Caco-2 (cell line): ENCODE measurements at regions of chr20 and their contacts with region 1.

Region 1: GRCh38 chr20:47453142-47453782 is 48.4 kb upstream of the NCOA3 start:
- DNase-seq: peak; percentile 67 to 82
- H3K4me3 ChIP-seq: no peak overlapping the region
- H3K4me3 Mint-ChIP-seq: peak overlapping the region; percentile 64
- H3K27ac Mint-ChIP-seq: peak overlapping the region; percentile 94
- H3K4me1 ChIP-seq: peaks cover 49% of the 10 kb centered on the region
- H3K4me1 Mint-ChIP-seq: peaks cover 45% of the 10 kb centered on the region
- H3K27me3 ChIP-seq: no peaks in the 10 kb centered on the region
- H3K27me3 Mint-ChIP-seq: no peaks in the 10 kb centered on the region
- CTCF ChIP-seq: no peak

Region 2: GRCh38 chr20:47392015-47392720 is 61.1 kb before region 1 on chr20:
- CTCF ChIA-PET with region 1: no interaction called
- POLR2A ChIA-PET with region 1: interaction called, 3 read pairs
- intact Hi-C with region 1: loop called (anchors 1 kb)
- DNase-seq: peak; percentile 68 to 82
- H3K4me3 ChIP-seq: no peak overlapping the region
- H3K4me3 Mint-ChIP-seq: no peak overlapping the region
- H3K27ac Mint-ChIP-seq: peak overlapping the region; percentile 64
- H3K4me1 ChIP-seq: peaks cover 12% of the 10 kb centered on the region
- H3K4me1 Mint-ChIP-seq: peaks cover 21% of the 10 kb centered on the region
- H3K27me3 ChIP-seq: no peaks in the 10 kb centered on the region
- H3K27me3 Mint-ChIP-seq: no peaks in the 10 kb centered on the region
- CTCF ChIP-seq: no peak

Region 3: DNA sequence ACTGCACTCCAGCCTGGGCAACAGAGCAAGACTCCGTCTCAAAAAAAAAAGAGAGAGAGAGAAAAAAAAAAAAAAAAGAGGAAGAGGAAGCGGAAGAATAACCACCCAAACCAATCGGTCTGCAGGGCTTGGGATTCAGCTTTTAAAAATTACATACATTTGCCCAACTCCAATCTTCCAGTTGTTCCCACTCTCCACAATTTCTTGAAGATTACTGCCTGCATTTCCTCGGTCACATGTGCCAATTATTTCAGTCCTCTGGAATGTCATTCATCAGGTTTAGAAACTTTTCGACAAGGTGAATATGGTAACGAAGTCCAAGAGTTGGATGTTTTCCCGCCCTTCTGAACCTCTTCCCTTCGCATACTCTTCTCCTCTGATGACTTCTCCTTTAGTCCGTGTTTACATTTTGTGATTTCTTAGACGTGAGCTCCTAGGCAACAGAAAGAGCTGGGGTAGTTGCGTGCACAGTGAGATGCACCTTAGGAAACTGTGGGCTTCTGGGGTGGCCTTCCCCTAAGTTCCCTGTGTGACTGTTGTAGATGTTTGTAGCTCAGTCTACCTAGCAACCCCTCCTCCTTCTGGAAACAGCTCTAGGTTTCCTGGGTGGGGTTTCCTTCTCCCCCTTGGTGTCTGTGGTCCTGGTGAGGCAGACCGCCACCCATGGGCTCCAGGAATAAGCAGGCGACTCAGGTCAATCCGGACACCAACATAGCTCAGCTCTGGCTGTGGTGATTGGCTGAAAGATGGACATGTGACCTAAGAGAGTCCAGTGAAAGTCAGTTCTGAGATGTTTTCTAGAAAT is 14.5 kb before region 1 on chr20:
- CTCF ChIA-PET with region 1: interaction called, 7 read pairs
- POLR2A ChIA-PET with region 1: interaction called, 60 read pairs
- intact Hi-C with region 1: loop called (anchors 1 kb)
- DNase-seq: peak; percentile 92 to 96
- H3K4me3 ChIP-seq: peak overlapping the region; percentile 2; the same call in 1 of the 2 replicates
- H3K4me3 Mint-ChIP-seq: peak overlapping the region; percentile 64
- H3K27ac Mint-ChIP-seq: peak overlapping the region; percentile 91
- H3K4me1 ChIP-seq: peaks cover 53% of the 10 kb centered on the region
- H3K4me1 Mint-ChIP-seq: peaks cover 28% of the 10 kb centered on the region
- H3K27me3 ChIP-seq: no peaks in the 10 kb centered on the region
- H3K27me3 Mint-ChIP-seq: no peaks in the 10 kb centered on the region
- CTCF ChIP-seq: no peak

Region 4: GRCh38 chr20:47464380-47465101 is 11.3 kb after region 1 on chr20:
- CTCF ChIA-PET with region 1: interaction called, 15 read pairs
- POLR2A ChIA-PET with region 1: interaction called, 4 read pairs
- intact Hi-C with region 1: loop called (anchors 1 kb)
- DNase-seq: peak; percentile 87 to 91
- H3K4me3 ChIP-seq: no peak overlapping the region
- H3K4me3 Mint-ChIP-seq: no peak overlapping the region
- H3K27ac Mint-ChIP-seq: peak overlapping the region; percentile 64
- H3K4me1 ChIP-seq: peaks cover 37% of the 10 kb centered on the region
- H3K4me1 Mint-ChIP-seq: peaks cover 43% of the 10 kb centered on the region
- H3K27me3 ChIP-seq: no peaks in the 10 kb centered on the region
- H3K27me3 Mint-ChIP-seq: no peaks in the 10 kb centered on the region
- CTCF ChIP-seq: peak in 1 of 2 experiments; percentile 70

Region 5: GRCh38 chr20:47493175-47493962 is 40.1 kb after region 1 on chr20:
- CTCF ChIA-PET with region 1: interaction called, 9 read pairs
- POLR2A ChIA-PET with region 1: interaction called, 7 read pairs
- intact Hi-C with region 1: loop called (anchors 1 kb)
- DNase-seq: peak; percentile 86
- H3K4me3 ChIP-seq: peak overlapping the region; percentile 11; the same call in 1 of the 2 replicates
- H3K4me3 Mint-ChIP-seq: peak overlapping the region; percentile 54
- H3K27ac Mint-ChIP-seq: peak overlapping the region; percentile 48
- H3K4me1 ChIP-seq: peaks cover 23% of the 10 kb centered on the region
- H3K4me1 Mint-ChIP-seq: peaks cover 25% of the 10 kb centered on the region
- H3K27me3 ChIP-seq: no peaks in the 10 kb centered on the region
- H3K27me3 Mint-ChIP-seq: no peaks in the 10 kb centered on the region
- CTCF ChIP-seq: peak in 1 of 2 experiments; percentile 7

Region 6: DNA sequence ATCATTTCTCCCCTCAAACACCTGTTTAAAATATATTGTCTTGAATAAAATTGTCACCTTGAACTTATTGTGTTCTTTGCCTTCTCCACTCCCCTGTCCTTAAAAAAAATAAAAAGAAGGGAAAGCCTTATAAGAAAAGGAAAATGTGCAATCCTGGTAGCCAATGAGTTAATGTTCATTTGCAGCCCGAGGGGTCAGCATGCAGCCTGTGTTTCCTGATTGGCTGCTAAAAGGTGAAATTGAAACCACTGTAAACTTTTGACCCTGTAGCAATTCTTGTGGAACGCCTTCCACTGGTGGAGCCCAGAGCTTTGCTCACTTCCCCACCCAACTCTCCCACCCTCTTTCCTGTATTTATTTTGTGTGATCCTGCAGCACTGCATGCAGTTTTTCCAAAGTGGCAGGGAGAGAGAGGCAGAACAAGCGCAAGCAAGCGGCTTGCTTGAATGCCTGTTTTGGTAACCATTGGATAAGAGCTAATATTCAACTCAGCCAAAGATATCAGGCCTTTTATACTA is 123.3 kb after region 1 on chr20:
- CTCF ChIA-PET with region 1: interaction called, 4 read pairs
- POLR2A ChIA-PET with region 1: no interaction called
- intact Hi-C with region 1: loop called (anchors 2 kb)
- DNase-seq: peak; percentile 88 to 93
- H3K4me3 ChIP-seq: peak overlapping the region; percentile 8
- H3K4me3 Mint-ChIP-seq: peak overlapping the region; percentile 53
- H3K27ac Mint-ChIP-seq: peak overlapping the region; percentile 11
- H3K4me1 ChIP-seq: peaks cover 39% of the 10 kb centered on the region
- H3K4me1 Mint-ChIP-seq: peaks cover 43% of the 10 kb centered on the region
- H3K27me3 ChIP-seq: no peaks in the 10 kb centered on the region
- H3K27me3 Mint-ChIP-seq: no peaks in the 10 kb centered on the region
- CTCF ChIP-seq: peak in 1 of 2 experiments; percentile 4